Posterior cingulate gyrus (tissue), 11 donors: ENCODE measurements at regions of chr2 and their contacts with region 1.

Region 1: GRCh38 chr2:112001136-112001715 is 53.8 kb upstream of the TMEM87B start:
- DNase-seq: no peak

Region 2: GRCh38 chr2:111667542-111668273 is 333.5 kb before region 1 on chr2:
- intact Hi-C with region 1: no loop called
- DNase-seq: no peak

Region 3: GRCh38 chr2:112024231-112024630 is 23.0 kb after region 1 on chr2:
- intact Hi-C with region 1: loop called (anchors 2 kb)
- DNase-seq: no peak